HepG2 (cell line): ENCODE measurements at regions of chr6 and their contacts with region 1.

Region 1: DNA sequence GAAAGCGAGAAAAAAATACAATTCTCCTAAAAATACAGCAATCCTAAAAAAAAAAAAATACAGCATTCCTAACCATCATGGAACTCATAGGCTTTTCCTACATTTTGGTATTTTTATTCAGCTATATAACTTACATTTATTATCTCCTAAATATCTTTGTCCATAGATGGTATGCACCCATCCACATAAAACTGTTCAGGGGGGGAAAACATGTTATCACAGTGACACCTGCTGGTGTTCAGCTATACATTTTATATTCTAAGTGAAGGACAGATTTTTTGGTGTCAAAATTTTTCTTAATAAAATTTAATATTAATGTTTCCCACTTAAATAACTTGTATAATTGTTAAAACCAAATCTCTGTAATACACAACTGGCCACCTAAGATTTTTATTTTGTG is 58.0 kb downstream of the BLOC1S5 start:
- DNase-seq: peak; percentile 48
- ATAC-seq: peak; percentile 47; the same call in 1 of the 3 replicates
- H3K4me3 ChIP-seq: no peak overlapping the region
- H3K27ac ChIP-seq: no peak overlapping the region
- H3K4me1 ChIP-seq: peaks cover 6% of the 10 kb centered on the region
- H3K27me3 ChIP-seq: no peaks in the 10 kb centered on the region
- CTCF ChIP-seq: peak; percentile 66
- EP300 ChIP-seq: no peak
- POLR2A ChIP-seq: no peak
- RAD21 ChIP-seq: peak; percentile 56

Region 2: GRCh38 chr6:7899101-7899888 is 106.9 kb before region 1 on chr6:
- CTCF ChIA-PET with region 1: interaction called, 15 read pairs
- POLR2A ChIA-PET with region 1: no interaction called
- in situ Hi-C with region 1: no loop called
- intact Hi-C with region 1: loop called (anchors 1 kb)
- DNase-seq: peak; percentile 50
- ATAC-seq: peak; percentile 72
- H3K4me3 ChIP-seq: no peak overlapping the region
- H3K27ac ChIP-seq: no peak overlapping the region
- H3K4me1 ChIP-seq: peaks cover 25% of the 10 kb centered on the region
- H3K27me3 ChIP-seq: no peaks in the 10 kb centered on the region
- CTCF ChIP-seq: peak; percentile 67
- EP300 ChIP-seq: no peak
- POLR2A ChIP-seq: no peak
- RAD21 ChIP-seq: peak; percentile 67

Region 3: GRCh38 chr6:8110117-8110721 is 104.0 kb after region 1 on chr6:
- CTCF ChIA-PET with region 1: no interaction called
- POLR2A ChIA-PET with region 1: no interaction called
- in situ Hi-C with region 1: no loop called
- intact Hi-C with region 1: no loop called
- DNase-seq: no peak
- ATAC-seq: no peak
- H3K4me3 ChIP-seq: no peak overlapping the region
- H3K27ac ChIP-seq: no peak overlapping the region
- H3K4me1 ChIP-seq: peaks cover 43% of the 10 kb centered on the region
- H3K27me3 ChIP-seq: 0 out of 5 replicates have a peak, but pooled peaks cover 0 to 3% of the 10 kb centered on the region in 2 experiments
- CTCF ChIP-seq: no peak
- EP300 ChIP-seq: no peak
- POLR2A ChIP-seq: no peak
- RAD21 ChIP-seq: no peak